AG04449 (cell line): ENCODE measurements at regions of chr15 and their contacts with region 1.

Region 1: DNA sequence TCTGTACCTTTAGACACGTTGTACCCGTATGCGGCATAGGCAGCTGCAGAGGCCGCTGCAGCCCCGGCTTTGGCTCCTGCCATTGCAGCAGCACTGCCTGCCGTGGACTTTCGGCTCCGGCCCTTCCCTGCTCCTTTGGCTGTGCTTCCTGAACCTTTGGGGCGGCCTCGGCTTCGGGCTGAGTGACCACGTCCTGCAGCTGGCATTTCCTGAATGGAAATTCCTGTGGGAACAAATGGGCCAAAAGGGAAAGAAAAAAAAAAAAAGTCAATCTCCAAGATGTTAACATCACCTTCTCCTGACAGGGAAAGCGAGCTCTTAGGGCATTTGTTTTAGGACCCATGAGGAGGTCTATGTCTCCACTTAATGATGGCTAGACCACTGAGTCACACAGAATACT is 29.6 kb downstream of the CHAC1 start:
- DNase-seq: peak; percentile 29
- H3K4me3 ChIP-seq: no peak overlapping the region
- CTCF ChIP-seq: no peak

Region 2: GRCh38 chr15:40694688-40695468 is 288.0 kb before region 1 on chr15 and contains the start of gene RAD51:
- CTCF ChIA-PET with region 1: no interaction called
- POLR2A ChIA-PET with region 1: no interaction called
- DNase-seq: peak; percentile 59
- H3K4me3 ChIP-seq: peak within 1 kb of the TSS; percentile 96
- CTCF ChIP-seq: no peak

Region 3: GRCh38 chr15:40952901-40953712 is 29.7 kb before region 1 on chr15 and contains the start of gene CHAC1:
- CTCF ChIA-PET with region 1: interaction called, 4 read pairs
- POLR2A ChIA-PET with region 1: interaction called, 25 read pairs
- DNase-seq: peak; percentile 86
- H3K4me3 ChIP-seq: peak within 1 kb of the TSS; percentile 96
- CTCF ChIP-seq: no peak

Region 4: DNA sequence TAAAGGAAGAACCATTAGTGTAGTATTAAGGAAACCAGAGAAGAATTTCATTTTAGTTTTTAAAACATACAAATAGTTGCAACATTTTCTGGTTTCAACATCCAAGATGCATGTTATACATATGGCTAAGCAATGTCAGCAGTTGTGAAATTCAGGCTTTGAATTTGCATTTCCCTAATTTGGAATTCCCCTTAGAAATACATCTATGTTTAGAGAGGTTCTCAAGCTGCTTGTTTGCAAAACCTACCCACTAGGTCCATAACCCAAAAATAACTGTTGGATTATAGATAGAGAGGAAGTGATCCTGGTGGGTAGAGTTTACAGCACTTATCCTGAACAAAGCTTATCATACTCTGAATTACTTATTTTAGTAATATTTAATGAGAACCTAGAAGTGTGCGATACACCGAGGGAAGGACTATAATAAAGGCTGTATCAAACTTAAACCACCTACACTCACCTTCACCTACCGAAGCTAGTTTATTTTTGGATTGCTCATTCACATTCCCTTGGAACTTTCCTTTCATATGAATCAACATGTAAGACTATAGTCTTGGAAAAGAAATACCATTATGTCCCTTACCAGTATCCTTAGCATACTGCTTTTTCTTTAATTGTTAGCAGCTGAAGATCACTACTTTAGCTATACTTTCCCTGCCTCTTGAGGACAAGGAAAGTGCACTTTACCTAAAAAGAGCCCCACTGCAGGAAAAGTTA is 31.0 kb after region 1 on chr15:
- CTCF ChIA-PET with region 1: interaction called, 10 read pairs
- POLR2A ChIA-PET with region 1: no interaction called
- DNase-seq: peak; percentile 44
- H3K4me3 ChIP-seq: no peak overlapping the region
- CTCF ChIP-seq: no peak

Region 5: DNA sequence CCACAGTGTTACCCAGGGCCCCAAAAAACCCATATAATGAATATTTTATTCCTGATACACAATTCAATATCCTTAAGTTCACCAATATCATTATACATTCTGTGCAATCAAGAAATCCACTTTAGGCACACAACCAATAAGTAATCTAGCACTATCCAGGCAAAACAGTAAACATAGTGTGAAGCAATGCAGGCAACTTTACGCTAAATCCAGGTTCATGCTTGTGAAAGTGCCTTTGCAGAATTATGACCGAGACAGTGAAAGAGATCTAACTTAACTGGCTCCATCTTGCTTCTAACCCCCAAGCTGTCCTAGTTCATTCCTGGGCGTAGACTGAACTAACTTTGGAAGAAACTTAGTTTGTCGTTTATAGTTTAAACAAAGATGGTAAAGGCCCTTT is 167.4 kb after region 1 on chr15:
- CTCF ChIA-PET with region 1: no interaction called
- POLR2A ChIA-PET with region 1: no interaction called
- DNase-seq: no peak
- H3K4me3 ChIP-seq: no peak overlapping the region
- CTCF ChIP-seq: no peak